ENCODE measurements at regions of chr19 and their contacts with region 1.

Region 1: GRCh38 chr19:42423462-42424344 is 3.5 kb downstream of the LIPE start:
- DNase-seq: peak; percentile 96
- H3K4me3 Mint-ChIP-seq: peak overlapping the region; percentile 96
- H3K27ac Mint-ChIP-seq: peak overlapping the region; percentile 88
- H3K4me1 Mint-ChIP-seq: peaks cover 34% of the 10 kb centered on the region
- H3K27me3 Mint-ChIP-seq: no peaks in the 10 kb centered on the region
- CTCF ChIP-seq: no peak

Region 2: GRCh38 chr19:42396381-42397262 is 27.1 kb before region 1 on chr19:
- CTCF ChIA-PET with region 1: interaction called, 7 read pairs
- POLR2A ChIA-PET with region 1: interaction called, 11 read pairs
- intact Hi-C with region 1: no loop called
- DNase-seq: peak; percentile 99
- H3K4me3 Mint-ChIP-seq: peak overlapping the region; percentile 83
- H3K27ac Mint-ChIP-seq: peak overlapping the region; percentile 99
- H3K4me1 Mint-ChIP-seq: peaks cover 47% of the 10 kb centered on the region
- H3K27me3 Mint-ChIP-seq: peaks cover 9% of the 10 kb centered on the region
- CTCF ChIP-seq: no peak

Region 3: DNA sequence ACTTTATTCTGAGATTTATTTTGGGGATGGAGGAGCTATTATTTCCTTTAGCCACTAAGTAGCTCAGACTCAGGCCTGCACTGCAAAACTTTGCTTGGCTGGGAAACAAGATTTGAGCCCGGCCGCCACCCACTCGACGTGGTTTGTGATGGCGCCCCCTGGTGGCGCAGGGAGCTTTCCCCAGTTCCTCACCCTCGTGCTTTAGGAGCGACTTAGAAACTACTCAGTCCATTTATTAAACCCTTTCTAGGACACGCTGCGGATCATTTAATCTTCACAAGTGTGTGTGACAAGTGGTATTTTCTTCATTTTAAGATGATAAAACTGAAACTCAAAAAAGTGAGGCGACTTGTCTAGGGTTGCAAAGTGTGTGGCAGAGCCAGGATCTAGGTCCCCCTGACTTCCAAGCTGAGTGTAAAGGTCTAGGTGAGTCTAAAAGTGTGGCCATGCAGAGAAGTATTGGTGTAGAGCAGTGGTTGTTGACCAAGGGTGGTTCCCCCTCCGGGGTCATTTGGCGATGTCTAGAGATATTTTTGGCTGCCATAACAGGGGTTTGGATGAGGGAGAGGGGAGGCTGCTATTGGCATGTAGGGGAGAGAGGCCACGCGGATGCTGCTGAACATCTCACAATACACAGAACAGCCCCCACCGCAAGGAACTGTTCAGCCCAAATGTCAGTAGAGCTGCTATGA is 16.8 kb after region 1 on chr19:
- CTCF ChIA-PET with region 1: interaction called, 13 read pairs
- POLR2A ChIA-PET with region 1: interaction called, 4 read pairs
- intact Hi-C with region 1: no loop called
- DNase-seq: peak; percentile 78
- H3K4me3 Mint-ChIP-seq: no peak overlapping the region
- H3K27ac Mint-ChIP-seq: no peak overlapping the region
- H3K4me1 Mint-ChIP-seq: peaks cover 6% of the 10 kb centered on the region
- H3K27me3 Mint-ChIP-seq: peaks cover 12% of the 10 kb centered on the region
- CTCF ChIP-seq: peak; percentile 87

Measured in MCF 10A (cell line).